Activated T-helper 1 cell treated with anti-CD3 and anti-CD28 coated beads, Interleukin-12 subunit alpha, Interleukin-12 subunit beta, Interleukin-2, Interleukin-4 antibody, amounts not matched to agents 30 ng/mL and 10 ng/mL and 1 ng/mL, durations not matched to agents 14 hours and 24 hours and 36 hours (primary cell): ENCODE measurements at regions of chr13 and their contacts with region 1.

Region 1: GRCh38 chr13:30114571-30115256 is 192.6 kb downstream of the KATNAL1 start:
- DNase-seq: peak; percentile 86
- H3K4me3 Mint-ChIP-seq: peak overlapping the region; percentile 81
- H3K27ac Mint-ChIP-seq: no peak overlapping the region
- H3K4me1 Mint-ChIP-seq: peaks cover 44% of the 10 kb centered on the region
- H3K27me3 Mint-ChIP-seq: peaks cover 18% of the 10 kb centered on the region

Region 2: GRCh38 chr13:29508130-29508875 is 606.4 kb before region 1 on chr13:
- intact Hi-C with region 1: loop called (anchors 2 kb)
- DNase-seq: peak; percentile 59
- H3K4me3 Mint-ChIP-seq: no peak overlapping the region
- H3K27ac Mint-ChIP-seq: no peak overlapping the region
- H3K4me1 Mint-ChIP-seq: no peaks in the 10 kb centered on the region
- H3K27me3 Mint-ChIP-seq: no peaks in the 10 kb centered on the region

Region 3: DNA sequence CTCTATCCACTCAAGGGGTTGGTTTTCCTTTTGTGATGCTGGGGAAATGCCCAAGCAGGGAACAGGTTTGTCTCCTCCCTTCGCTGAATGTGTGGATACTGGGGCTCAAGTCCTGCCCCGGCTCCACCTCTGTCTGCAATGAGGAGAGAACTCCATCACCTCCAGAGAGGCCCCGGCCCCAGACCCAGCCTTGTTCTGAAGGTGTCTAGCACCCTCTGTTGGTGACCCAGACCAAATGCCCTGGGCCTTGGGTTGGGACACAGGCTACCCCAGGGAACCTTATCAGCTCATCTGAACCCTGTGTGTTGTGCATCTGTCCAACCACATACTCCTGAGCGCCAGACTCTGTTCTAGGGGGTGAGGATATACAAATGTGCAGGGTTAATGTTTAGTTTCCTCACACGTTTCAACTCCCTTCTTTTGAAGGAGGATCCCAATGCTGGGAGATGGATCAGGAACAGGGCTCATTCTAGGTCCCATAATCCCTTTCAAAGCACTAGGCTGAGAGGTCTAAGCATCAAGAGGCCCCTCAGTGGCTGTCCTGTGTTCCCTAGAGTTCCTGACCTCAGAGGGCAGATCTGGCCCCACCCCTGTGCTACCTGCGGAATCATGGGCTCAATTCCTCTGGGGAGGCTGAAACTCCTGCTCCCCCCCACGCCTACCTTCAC is 406.7 kb before region 1 on chr13:
- intact Hi-C with region 1: loop called (anchors 5 kb)
- DNase-seq: peak; percentile 31
- H3K4me3 Mint-ChIP-seq: no peak overlapping the region
- H3K27ac Mint-ChIP-seq: no peak overlapping the region
- H3K4me1 Mint-ChIP-seq: no peaks in the 10 kb centered on the region
- H3K27me3 Mint-ChIP-seq: peaks cover 12% of the 10 kb centered on the region

Region 4: DNA sequence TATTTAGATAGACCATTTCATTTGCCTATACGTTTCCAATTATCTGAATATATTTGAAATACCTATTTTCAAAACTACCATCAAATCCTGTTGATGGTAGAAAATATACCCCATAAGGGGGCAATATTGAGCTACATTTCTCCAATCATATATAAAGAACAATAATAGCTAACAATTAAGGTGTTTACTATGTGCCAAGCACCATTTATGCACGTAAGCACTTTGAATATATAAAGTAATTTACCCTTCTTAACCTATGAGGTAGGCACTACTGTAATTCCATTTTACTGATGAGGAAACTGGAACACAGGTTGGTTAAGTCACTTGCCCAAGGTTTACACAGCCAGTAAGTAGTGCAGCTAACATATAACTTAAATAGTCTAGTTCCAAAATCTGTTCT is 343.5 kb before region 1 on chr13:
- intact Hi-C with region 1: loop called (anchors 1 kb)
- DNase-seq: no peak
- H3K4me3 Mint-ChIP-seq: no peak overlapping the region
- H3K27ac Mint-ChIP-seq: no peak overlapping the region
- H3K4me1 Mint-ChIP-seq: no peaks in the 10 kb centered on the region
- H3K27me3 Mint-ChIP-seq: no peaks in the 10 kb centered on the region

Region 5: GRCh38 chr13:29923554-29924481 is 190.9 kb before region 1 on chr13:
- intact Hi-C with region 1: loop called (anchors 5 kb)
- DNase-seq: peak; percentile 14
- H3K4me3 Mint-ChIP-seq: no peak overlapping the region
- H3K27ac Mint-ChIP-seq: no peak overlapping the region
- H3K4me1 Mint-ChIP-seq: peaks cover 31% of the 10 kb centered on the region
- H3K27me3 Mint-ChIP-seq: peaks cover 10% of the 10 kb centered on the region

Region 6: GRCh38 chr13:30142486-30143211 is 27.9 kb after region 1 on chr13:
- intact Hi-C with region 1: loop called (anchors 1 kb)
- DNase-seq: peak; percentile 28
- H3K4me3 Mint-ChIP-seq: peak overlapping the region; percentile 31
- H3K27ac Mint-ChIP-seq: peak overlapping the region; percentile 86
- H3K4me1 Mint-ChIP-seq: peaks cover 61% of the 10 kb centered on the region
- H3K27me3 Mint-ChIP-seq: peaks cover 4% of the 10 kb centered on the region

Region 7: GRCh38 chr13:30158774-30159445 is 44.2 kb after region 1 on chr13:
- intact Hi-C with region 1: loop called (anchors 1 kb)
- DNase-seq: no peak
- H3K4me3 Mint-ChIP-seq: peak overlapping the region; percentile 23
- H3K27ac Mint-ChIP-seq: peak overlapping the region; percentile 78
- H3K4me1 Mint-ChIP-seq: peaks cover 43% of the 10 kb centered on the region
- H3K27me3 Mint-ChIP-seq: peaks cover under 1% of the 10 kb centered on the region